HepG2 (cell line): ENCODE measurements at regions of chr11 and their contacts with region 1.

Region 1: GRCh38 chr11:71251761-71252443 is 475 bp downstream of the SHANK2 start:
- DNase-seq: no peak
- ATAC-seq: peak; percentile 46
- H3K4me3 ChIP-seq: peak overlapping the region; percentile 87 to 95 (median 90)
- H3K27ac ChIP-seq: peak overlapping the region; percentile 98
- H3K4me1 ChIP-seq: peaks cover 69% of the 10 kb centered on the region
- H3K27me3 ChIP-seq: no peaks in the 10 kb centered on the region; a peak in 1 of 5 replicates
- CTCF ChIP-seq: peak; percentile 69
- EP300 ChIP-seq: no peak; a peak in 1 of 4 replicates
- POLR2A ChIP-seq: 0 out of 4 replicates have a peak, but pooled peaks of 1 of the 2 experiments have one; percentile 11
- RAD21 ChIP-seq: peak; percentile 84

Region 2: DNA sequence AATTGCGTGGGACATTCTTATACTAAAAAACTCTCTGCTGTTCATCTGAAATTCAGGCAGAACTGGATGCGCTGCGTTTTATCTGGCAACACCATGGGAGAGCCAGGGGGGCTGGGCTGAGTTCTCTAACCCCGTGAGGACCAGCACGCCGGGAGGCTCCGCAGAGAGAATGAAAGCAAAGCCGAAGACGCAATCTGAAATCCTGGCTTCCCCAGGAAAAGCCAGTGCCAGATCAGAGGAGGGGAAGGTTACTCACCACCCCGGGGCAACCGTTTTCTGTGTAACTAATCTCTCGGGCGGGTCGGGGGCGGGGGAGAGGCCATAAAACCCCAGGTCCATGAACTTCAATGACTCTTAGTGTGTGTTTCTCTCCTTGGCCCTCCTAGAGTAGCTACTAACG is 98.9 kb before region 1 on chr11:
- CTCF ChIA-PET with region 1: no interaction called
- POLR2A ChIA-PET with region 1: interaction called, 23 read pairs
- in situ Hi-C with region 1: no loop called
- intact Hi-C with region 1: loop called (anchors 10 kb)
- DNase-seq: peak; percentile 46
- ATAC-seq: peak; percentile 65
- H3K4me3 ChIP-seq: peak overlapping the region; percentile 30 to 58 (median 48); a peak in 5 of 6 replicates
- H3K27ac ChIP-seq: peak overlapping the region; percentile 88
- H3K4me1 ChIP-seq: peaks cover 47% of the 10 kb centered on the region
- H3K27me3 ChIP-seq: no peaks in the 10 kb centered on the region
- CTCF ChIP-seq: no peak
- EP300 ChIP-seq: no peak
- POLR2A ChIP-seq: no peak
- RAD21 ChIP-seq: no peak

Region 3: GRCh38 chr11:71240865-71241691 is 10.8 kb before region 1 on chr11:
- CTCF ChIA-PET with region 1: no interaction called
- POLR2A ChIA-PET with region 1: interaction called, 55 read pairs
- in situ Hi-C with region 1: no loop called
- intact Hi-C with region 1: no loop called
- DNase-seq: peak; percentile 93
- ATAC-seq: peak; percentile 85
- H3K4me3 ChIP-seq: peak overlapping the region; percentile 18 to 44 (median 19); a peak in 3 of 6 replicates
- H3K27ac ChIP-seq: peak overlapping the region; percentile 88
- H3K4me1 ChIP-seq: peaks cover 68% of the 10 kb centered on the region
- H3K27me3 ChIP-seq: no peaks in the 10 kb centered on the region
- CTCF ChIP-seq: peak; percentile 16; the same call in 1 of the 2 replicates
- EP300 ChIP-seq: peak; percentile 76 to 87; a peak in 3 of 4 replicates
- POLR2A ChIP-seq: peak in 1 of 2 experiments; percentile 41; a peak in 1 of 4 replicates
- RAD21 ChIP-seq: no peak

Region 4: GRCh38 chr11:71266221-71266833 is 14.4 kb after region 1 on chr11:
- CTCF ChIA-PET with region 1: no interaction called
- POLR2A ChIA-PET with region 1: interaction called, 48 read pairs
- in situ Hi-C with region 1: no loop called
- intact Hi-C with region 1: no loop called
- DNase-seq: no peak
- ATAC-seq: peak; percentile 34
- H3K4me3 ChIP-seq: peak overlapping the region in 1 of 3 experiments; percentile 50; a peak in 2 of 6 replicates
- H3K27ac ChIP-seq: peak overlapping the region; percentile 20
- H3K4me1 ChIP-seq: peaks cover 71% of the 10 kb centered on the region
- H3K27me3 ChIP-seq: 0 out of 5 replicates have a peak, but pooled peaks cover 0 to 6% of the 10 kb centered on the region in 2 experiments
- CTCF ChIP-seq: peak; percentile 39
- EP300 ChIP-seq: no peak
- POLR2A ChIP-seq: no peak
- RAD21 ChIP-seq: no peak

Region 5: DNA sequence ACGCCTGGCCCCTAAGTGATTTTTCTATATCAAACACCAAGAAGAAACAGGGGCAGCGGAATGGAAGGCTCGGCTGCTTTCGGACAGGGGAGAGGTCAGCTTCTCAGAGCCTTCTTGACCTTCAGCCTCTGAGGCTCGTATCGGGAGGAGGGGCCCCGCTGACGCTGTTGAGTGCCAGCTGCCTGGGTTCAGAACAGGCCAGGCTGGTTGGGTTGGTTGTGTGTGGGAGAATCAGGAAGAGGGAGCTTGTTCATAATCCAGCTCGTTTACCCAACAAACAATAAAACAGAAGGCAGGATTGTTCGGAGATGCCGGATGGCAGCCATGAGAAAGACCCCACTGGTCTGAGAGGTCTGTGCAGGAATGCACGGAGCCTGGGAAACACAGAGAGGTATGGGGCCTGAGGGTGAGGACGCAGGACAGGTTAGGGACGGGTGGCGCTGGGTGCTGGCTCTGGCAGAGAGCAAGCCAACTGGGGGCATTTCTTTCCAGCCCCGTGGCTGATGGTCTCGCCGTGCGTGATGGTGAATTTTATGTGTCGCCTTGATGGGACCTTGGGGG is 32.1 kb after region 1 on chr11:
- CTCF ChIA-PET with region 1: no interaction called
- POLR2A ChIA-PET with region 1: interaction called, 21 read pairs
- in situ Hi-C with region 1: no loop called
- intact Hi-C with region 1: loop called (anchors 2 kb)
- DNase-seq: peak; percentile 62
- ATAC-seq: peak; percentile 39
- H3K4me3 ChIP-seq: peak overlapping the region in 1 of 3 experiments; percentile 22; a peak in 1 of 6 replicates
- H3K27ac ChIP-seq: no peak overlapping the region
- H3K4me1 ChIP-seq: peaks cover 71% of the 10 kb centered on the region
- H3K27me3 ChIP-seq: 0 out of 5 replicates have a peak, but pooled peaks cover 0 to 5% of the 10 kb centered on the region in 2 experiments
- CTCF ChIP-seq: no peak
- EP300 ChIP-seq: no peak
- POLR2A ChIP-seq: no peak
- RAD21 ChIP-seq: no peak

Region 6: GRCh38 chr11:71307811-71308645 is 56.1 kb after region 1 on chr11:
- CTCF ChIA-PET with region 1: no interaction called
- POLR2A ChIA-PET with region 1: interaction called, 10 read pairs
- in situ Hi-C with region 1: no loop called
- intact Hi-C with region 1: loop called (anchors 2 kb)
- DNase-seq: no peak
- ATAC-seq: peak; percentile 46
- H3K4me3 ChIP-seq: no peak overlapping the region
- H3K27ac ChIP-seq: no peak overlapping the region
- H3K4me1 ChIP-seq: peaks cover 54% of the 10 kb centered on the region
- H3K27me3 ChIP-seq: peaks cover under 1 to 10% of the 10 kb centered on the region in 2 experiments; a peak in 1 of 5 replicates
- CTCF ChIP-seq: no peak
- EP300 ChIP-seq: no peak
- POLR2A ChIP-seq: no peak
- RAD21 ChIP-seq: no peak

Region 7: DNA sequence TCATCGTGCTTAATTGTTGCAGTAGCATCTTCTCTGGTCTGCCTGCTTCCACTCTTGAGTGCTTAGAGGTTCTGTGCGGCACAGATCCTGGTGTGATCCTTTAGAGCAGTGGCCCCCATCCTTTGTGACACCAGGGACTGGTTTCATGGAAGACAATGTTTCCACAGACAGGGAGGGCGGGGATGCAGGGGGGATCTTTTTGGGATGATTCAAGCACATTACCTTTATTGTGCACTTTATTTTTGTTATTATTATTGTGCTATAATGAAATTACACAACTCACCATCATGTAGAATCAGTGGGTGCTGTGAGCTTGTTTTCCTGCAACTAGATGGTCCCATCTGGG is 77.2 kb after region 1 on chr11:
- CTCF ChIA-PET with region 1: interaction called, 3 read pairs
- POLR2A ChIA-PET with region 1: interaction called, 5 read pairs
- in situ Hi-C with region 1: no loop called
- intact Hi-C with region 1: loop called (anchors 2 kb)
- DNase-seq: no peak
- ATAC-seq: no peak
- H3K4me3 ChIP-seq: no peak overlapping the region
- H3K27ac ChIP-seq: no peak overlapping the region
- H3K4me1 ChIP-seq: peaks cover 19% of the 10 kb centered on the region
- H3K27me3 ChIP-seq: peaks cover 1 to 53% of the 10 kb centered on the region in 2 experiments
- CTCF ChIP-seq: no peak
- EP300 ChIP-seq: no peak
- POLR2A ChIP-seq: no peak
- RAD21 ChIP-seq: no peak